ENCODE measurements at regions of chr4 and their contacts with region 1.

Region 1: GRCh38 chr4:107736924-107737448 is 17.0 kb upstream of the PAPSS1 start:
- DNase-seq: no peak
- ATAC-seq: peak; percentile 89
- H3K4me3 ChIP-seq: no peak overlapping the region
- H3K27ac ChIP-seq: no peak overlapping the region
- H3K4me1 ChIP-seq: no peaks in the 10 kb centered on the region
- H3K27me3 ChIP-seq: no peaks in the 10 kb centered on the region
- CTCF ChIP-seq: peak; percentile 76 to 83 (median 83)
- EP300 ChIP-seq: no peak
- POLR2A ChIP-seq: no peak
- RAD21 ChIP-seq: peak; percentile 87

Region 2: DNA sequence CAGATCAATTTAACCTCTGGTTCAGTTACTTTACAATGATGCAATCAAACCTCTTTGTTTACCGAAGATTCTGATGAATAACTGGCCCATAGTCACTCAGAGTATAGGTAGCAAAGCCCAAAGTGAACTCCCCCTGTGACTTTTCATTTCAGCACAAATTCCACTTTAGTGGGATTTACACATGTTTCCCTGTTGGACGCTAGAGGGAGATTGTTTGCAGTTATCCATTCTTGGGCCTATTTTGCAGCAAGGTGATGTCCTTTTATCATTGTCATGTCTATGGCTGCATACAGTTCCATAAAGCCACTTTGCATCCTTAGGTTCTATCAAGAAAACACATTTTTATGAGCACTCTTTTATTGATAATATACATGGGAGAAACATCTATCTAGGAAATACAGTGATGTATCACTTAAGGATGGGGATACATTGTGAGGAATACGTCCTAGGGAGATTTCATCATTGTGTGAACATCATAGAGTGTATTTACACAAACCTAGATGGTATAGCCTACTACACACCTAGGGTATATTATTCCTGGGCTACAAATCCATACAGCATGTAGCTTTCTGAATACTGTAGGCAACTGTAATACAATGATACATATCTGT is 686.4 kb before region 1 on chr4:
- CTCF ChIA-PET with region 1: interaction called, 3 read pairs
- POLR2A ChIA-PET with region 1: no interaction called
- RAD21 ChIA-PET with region 1: no interaction called
- SMC1A ChIA-PET with region 1: no interaction called
- in situ Hi-C with region 1: loop called (anchors 25 kb)
- intact Hi-C with region 1: loop called (anchors 5 kb)
- DNase-seq: no peak
- ATAC-seq: peak; percentile 58
- H3K4me3 ChIP-seq: no peak overlapping the region
- H3K27ac ChIP-seq: no peak overlapping the region
- H3K4me1 ChIP-seq: no peaks in the 10 kb centered on the region
- H3K27me3 ChIP-seq: no peaks in the 10 kb centered on the region
- CTCF ChIP-seq: peak; percentile 39 to 52 (median 48); a peak in 5 of 6 replicates
- EP300 ChIP-seq: no peak
- POLR2A ChIP-seq: no peak
- RAD21 ChIP-seq: peak; percentile 25; the same call in 1 of the 2 replicates

Region 3: DNA sequence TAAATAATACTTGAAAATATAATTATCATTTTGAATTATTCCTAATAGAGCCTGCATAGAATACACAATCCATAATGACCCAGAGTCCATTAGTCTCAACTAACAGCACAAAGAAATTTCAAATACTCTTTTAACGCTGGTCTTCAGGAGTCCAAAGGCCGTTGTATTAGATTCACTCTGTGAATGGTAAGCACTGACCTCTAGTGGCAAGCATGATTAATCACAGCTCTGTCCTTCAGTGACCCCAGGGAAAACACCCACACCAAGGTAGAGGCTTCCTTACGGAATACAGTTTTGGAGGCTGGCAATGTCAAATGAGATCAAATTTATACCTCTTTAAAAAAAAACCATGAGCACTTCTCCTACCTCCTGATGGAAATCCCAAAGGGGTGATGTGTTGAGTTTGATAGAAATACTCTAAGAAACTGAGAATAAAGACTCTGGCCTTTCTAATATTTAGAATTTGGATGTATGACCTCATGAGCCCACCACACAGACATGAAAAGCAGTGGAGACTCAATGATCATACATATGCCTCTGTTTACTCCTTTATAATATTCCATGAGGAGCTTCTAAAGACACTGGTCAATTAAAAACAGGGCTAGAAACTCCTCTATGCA is 553.7 kb before region 1 on chr4:
- CTCF ChIA-PET with region 1: interaction called, 18 read pairs
- POLR2A ChIA-PET with region 1: no interaction called
- RAD21 ChIA-PET with region 1: no interaction called
- SMC1A ChIA-PET with region 1: interaction called, 4 read pairs
- in situ Hi-C with region 1: no loop called
- intact Hi-C with region 1: loop called (anchors 10 kb)
- DNase-seq: peak; percentile 3
- ATAC-seq: peak; percentile 99
- H3K4me3 ChIP-seq: no peak overlapping the region
- H3K27ac ChIP-seq: no peak overlapping the region
- H3K4me1 ChIP-seq: no peaks in the 10 kb centered on the region
- H3K27me3 ChIP-seq: no peaks in the 10 kb centered on the region
- CTCF ChIP-seq: peak; percentile 73 to 79 (median 78)
- EP300 ChIP-seq: no peak
- POLR2A ChIP-seq: no peak
- RAD21 ChIP-seq: peak; percentile 82

Region 4: DNA sequence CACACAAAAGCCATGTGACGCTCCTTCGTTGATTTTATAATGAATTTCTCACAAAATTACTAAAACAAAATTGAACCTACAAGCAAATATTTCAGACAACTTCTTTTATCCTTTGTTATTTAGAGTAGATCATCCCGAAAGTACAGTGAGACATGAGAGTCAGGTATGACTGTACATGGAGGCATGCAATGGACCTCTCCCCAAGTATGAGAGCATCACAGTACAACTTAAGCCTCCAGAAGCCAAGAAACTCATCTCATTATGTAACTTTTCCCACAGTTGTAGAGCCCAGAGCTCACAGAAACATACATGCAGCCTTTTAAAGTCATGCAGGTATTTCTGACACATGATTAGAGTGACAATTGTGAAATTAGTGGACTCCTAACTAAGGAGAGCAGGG is 184.7 kb before region 1 on chr4:
- CTCF ChIA-PET with region 1: interaction called, 15 read pairs
- POLR2A ChIA-PET with region 1: no interaction called
- RAD21 ChIA-PET with region 1: interaction called, 10 read pairs
- SMC1A ChIA-PET with region 1: no interaction called
- in situ Hi-C with region 1: no loop called
- intact Hi-C with region 1: no loop called
- DNase-seq: no peak
- ATAC-seq: no peak
- H3K4me3 ChIP-seq: no peak overlapping the region
- H3K27ac ChIP-seq: no peak overlapping the region
- H3K4me1 ChIP-seq: no peaks in the 10 kb centered on the region
- H3K27me3 ChIP-seq: no peaks in the 10 kb centered on the region
- CTCF ChIP-seq: no peak
- EP300 ChIP-seq: no peak
- POLR2A ChIP-seq: no peak
- RAD21 ChIP-seq: no peak

Region 5: DNA sequence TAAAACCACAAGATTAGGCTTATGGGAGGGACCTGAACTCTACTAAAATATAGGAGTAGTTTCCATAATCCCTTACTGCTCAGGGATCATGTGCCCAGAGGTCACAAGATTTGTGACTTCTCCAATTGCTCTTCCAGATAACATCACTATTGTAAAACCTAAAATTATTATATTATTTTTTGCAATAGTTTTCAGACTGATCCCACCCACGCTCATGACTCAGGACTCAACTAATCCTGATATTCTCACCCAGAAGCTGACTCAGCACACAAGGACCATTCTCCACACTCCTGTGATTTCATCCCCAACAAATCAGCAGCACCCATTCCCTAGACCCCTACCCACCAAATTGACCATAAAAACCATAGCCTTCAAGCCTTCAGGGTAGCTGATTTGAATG is 859.4 kb after region 1 on chr4:
- CTCF ChIA-PET with region 1: no interaction called
- POLR2A ChIA-PET with region 1: no interaction called
- RAD21 ChIA-PET with region 1: no interaction called
- SMC1A ChIA-PET with region 1: no interaction called
- in situ Hi-C with region 1: no loop called
- intact Hi-C with region 1: no loop called
- DNase-seq: no peak
- ATAC-seq: no peak
- H3K4me3 ChIP-seq: no peak overlapping the region
- H3K27ac ChIP-seq: no peak overlapping the region
- H3K4me1 ChIP-seq: no peaks in the 10 kb centered on the region
- H3K27me3 ChIP-seq: no peaks in the 10 kb centered on the region
- CTCF ChIP-seq: no peak
- EP300 ChIP-seq: no peak
- POLR2A ChIP-seq: no peak
- RAD21 ChIP-seq: no peak